ENCODE measurements at regions of chr6 and their contacts with region 1.

Region 1: DNA sequence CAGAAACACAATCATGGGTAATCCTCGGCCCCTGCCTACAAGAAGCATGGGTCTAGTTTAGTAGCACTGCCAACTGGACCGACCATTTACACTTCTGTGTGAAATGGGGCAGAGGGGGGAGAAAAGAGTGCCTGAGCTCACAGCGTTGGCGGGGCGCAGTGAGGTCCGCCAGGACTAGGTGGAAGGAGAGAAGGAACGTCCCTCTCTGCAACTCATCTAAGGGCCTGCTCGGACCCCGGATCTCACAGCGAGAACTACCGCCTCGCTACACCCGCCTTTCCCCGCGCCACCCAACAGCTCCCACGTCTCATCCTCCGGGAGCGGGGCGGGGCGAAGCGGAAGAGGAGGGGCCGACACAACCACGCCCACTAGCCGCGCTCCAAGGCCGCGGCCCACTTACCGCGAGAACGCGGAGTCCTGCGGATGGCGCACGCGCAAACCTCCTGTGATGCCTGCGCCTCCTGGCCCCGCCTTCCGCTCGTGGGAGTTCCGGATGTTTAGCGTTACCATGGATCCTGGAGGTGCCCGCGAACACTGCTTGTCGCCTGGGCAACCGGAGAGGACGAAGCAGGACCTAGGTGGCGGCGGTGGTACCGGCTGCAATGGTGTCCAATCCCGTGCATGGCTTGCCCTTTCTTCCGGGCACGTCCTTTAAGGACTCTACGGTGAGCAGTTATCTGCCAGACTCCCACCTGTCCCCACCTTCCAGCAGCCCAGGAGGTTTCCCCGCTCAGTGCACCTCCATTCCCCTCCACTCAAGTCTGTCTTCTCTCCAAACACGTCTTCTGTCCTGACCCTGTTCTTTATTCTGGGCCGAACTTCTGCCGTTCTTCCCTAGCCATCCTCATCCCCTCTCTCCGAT is at the start of gene EFHC1:
- DNase-seq: peak; percentile 97 to 99 (median 98)
- ATAC-seq: peak; percentile 96
- H3K4me3 ChIP-seq: peak within 1 kb of the TSS; percentile 69
- H3K27ac ChIP-seq: peak within 1 kb of the TSS; percentile 75
- H3K4me1 ChIP-seq: peaks cover 24 to 31% of the 10 kb centered on the region in 2 experiments
- H3K27me3 ChIP-seq: no peaks in the 10 kb centered on the region; a peak in 1 of 5 replicates
- CTCF ChIP-seq: peak in 1 of 3 experiments; percentile 29; a peak in 1 of 6 replicates
- EP300 ChIP-seq: no peak
- POLR2A ChIP-seq: peak; percentile 93
- RAD21 ChIP-seq: peak in 1 of 2 experiments; percentile 15; a peak in 1 of 4 replicates
- polyA plus RNA-seq, gene EFHC1: 15.7 to 17.2 TPM

Region 2: GRCh38 chr6:52482903-52483670 is 63.0 kb after region 1 on chr6:
- CTCF ChIA-PET with region 1: no interaction called
- POLR2A ChIA-PET with region 1: interaction called, 3 read pairs
- in situ Hi-C with region 1: no loop called
- intact Hi-C with region 1: loop called (anchors 5 kb)
- DNase-seq: peak; percentile 50 to 90 (median 64)
- ATAC-seq: peak; percentile 87
- H3K4me3 ChIP-seq: peak overlapping the region; percentile 21; the same call in 1 of the 2 replicates
- H3K27ac ChIP-seq: peak overlapping the region; percentile 76
- H3K4me1 ChIP-seq: peaks cover 0 to 30% of the 10 kb centered on the region in 2 experiments
- H3K27me3 ChIP-seq: no peaks in the 10 kb centered on the region
- CTCF ChIP-seq: no peak
- EP300 ChIP-seq: peak; percentile 69
- POLR2A ChIP-seq: no peak
- RAD21 ChIP-seq: no peak

Region 3: DNA sequence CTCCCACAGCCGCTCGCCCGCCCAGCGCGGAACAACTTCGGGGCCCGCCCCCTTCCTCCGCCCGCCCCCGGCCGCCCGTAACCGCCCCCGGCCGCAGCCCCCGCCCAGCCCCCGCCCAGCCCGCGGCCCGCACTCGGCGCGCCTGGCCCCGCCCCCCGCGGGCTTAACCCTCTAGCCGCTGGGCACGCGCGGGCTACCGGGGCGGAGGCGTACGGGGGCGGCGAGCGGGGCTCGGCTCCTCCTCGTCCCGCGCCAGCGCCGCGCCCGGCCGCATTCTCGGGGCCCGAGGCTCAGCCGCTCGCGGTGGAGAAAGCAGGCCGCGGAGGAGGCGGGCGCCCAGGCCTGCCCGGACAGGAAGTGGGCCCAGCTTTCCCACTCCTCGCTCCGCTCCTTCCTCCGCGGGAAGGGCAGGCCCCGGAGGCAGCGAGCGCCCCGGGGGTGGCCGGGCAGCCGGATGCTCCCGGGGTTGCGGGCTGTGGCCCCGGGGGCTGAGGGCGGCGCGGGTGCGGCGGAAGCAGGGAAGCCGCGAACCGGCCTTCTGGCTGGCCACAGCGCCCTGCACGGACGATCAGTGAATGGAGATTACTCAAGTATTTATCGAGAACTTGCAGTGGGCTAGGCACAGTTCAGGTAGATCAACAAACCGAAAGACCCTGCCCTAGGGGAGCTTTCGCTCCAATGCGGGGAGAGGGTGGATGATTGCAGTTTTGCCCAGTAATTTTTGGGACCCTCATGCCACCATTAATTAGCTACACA is 157.2 kb after region 1 on chr6 and contains the start of gene TRAM2:
- CTCF ChIA-PET with region 1: no interaction called
- POLR2A ChIA-PET with region 1: interaction called, 7 read pairs
- in situ Hi-C with region 1: no loop called
- intact Hi-C with region 1: loop called (anchors 5 kb)
- DNase-seq: peak; percentile 89 to 95 (median 94)
- ATAC-seq: peak; percentile 82
- H3K4me3 ChIP-seq: peak within 1 kb of the TSS; percentile 77
- H3K27ac ChIP-seq: peak within 1 kb of the TSS; percentile 85
- H3K4me1 ChIP-seq: peaks cover 22 to 30% of the 10 kb centered on the region in 2 experiments; a peak in 4 of 5 replicates
- H3K27me3 ChIP-seq: no peaks in the 10 kb centered on the region
- CTCF ChIP-seq: peak; percentile 18 to 28 (median 26); a peak in 2 of 6 replicates
- EP300 ChIP-seq: no peak; the same call in 1 of the 2 replicates
- POLR2A ChIP-seq: peak; percentile 80
- RAD21 ChIP-seq: peak in 1 of 2 experiments; percentile 31; a peak in 2 of 4 replicates
- polyA plus RNA-seq, gene TRAM2: 2.6 to 2.8 TPM

Region 4: DNA sequence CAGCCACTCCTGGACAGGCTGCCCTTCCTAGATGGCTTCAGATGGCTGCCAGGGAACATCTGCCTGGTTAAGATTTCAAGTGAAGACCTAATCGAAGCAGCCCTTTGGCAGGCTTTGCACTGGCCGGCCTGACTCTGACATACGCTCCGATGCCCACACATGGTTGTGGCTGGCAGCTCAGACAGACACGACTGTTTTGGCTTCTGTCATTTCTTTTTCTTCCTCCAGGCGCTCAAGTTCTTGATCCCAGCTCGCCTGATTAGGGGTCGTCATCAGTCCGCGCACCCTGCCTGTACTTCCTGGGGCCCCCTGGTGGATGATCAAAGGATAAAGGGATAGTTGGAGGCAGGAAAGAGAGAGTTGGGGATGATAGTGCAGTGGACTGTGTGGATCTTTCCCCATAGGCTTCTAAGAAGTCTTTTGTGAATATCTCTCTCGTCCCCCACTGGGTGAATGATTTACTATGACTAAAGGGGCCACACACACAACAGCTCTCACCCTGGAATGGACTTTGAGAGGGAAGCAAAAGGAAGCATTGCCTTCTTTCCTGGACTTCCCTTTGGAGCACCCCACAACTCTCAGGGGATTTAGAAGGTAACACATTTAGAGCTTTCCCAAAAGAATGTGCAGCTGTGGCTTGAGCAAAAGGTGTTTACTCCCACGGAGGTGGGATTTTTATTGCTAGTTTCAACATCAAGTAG is 178.2 kb after region 1 on chr6:
- CTCF ChIA-PET with region 1: interaction called, 11 read pairs
- POLR2A ChIA-PET with region 1: interaction called, 3 read pairs
- in situ Hi-C with region 1: loop called (anchors 5 kb)
- intact Hi-C with region 1: loop called (anchors 2 kb)
- DNase-seq: peak; percentile 87 to 89 (median 89)
- ATAC-seq: peak; percentile 96
- H3K4me3 ChIP-seq: peak overlapping the region; percentile 3; the same call in 1 of the 2 replicates
- H3K27ac ChIP-seq: peak overlapping the region; percentile 29; the same call in 1 of the 3 replicates
- H3K4me1 ChIP-seq: peaks cover 0 to 17% of the 10 kb centered on the region in 2 experiments; a peak in 3 of 5 replicates
- H3K27me3 ChIP-seq: no peaks in the 10 kb centered on the region
- CTCF ChIP-seq: peak; percentile 93 to 98 (median 93)
- EP300 ChIP-seq: peak; percentile 35; the same call in 1 of the 2 replicates
- POLR2A ChIP-seq: peak; percentile 55; the same call in 1 of the 2 replicates
- RAD21 ChIP-seq: peak; percentile 68 to 79

Region 5: DNA sequence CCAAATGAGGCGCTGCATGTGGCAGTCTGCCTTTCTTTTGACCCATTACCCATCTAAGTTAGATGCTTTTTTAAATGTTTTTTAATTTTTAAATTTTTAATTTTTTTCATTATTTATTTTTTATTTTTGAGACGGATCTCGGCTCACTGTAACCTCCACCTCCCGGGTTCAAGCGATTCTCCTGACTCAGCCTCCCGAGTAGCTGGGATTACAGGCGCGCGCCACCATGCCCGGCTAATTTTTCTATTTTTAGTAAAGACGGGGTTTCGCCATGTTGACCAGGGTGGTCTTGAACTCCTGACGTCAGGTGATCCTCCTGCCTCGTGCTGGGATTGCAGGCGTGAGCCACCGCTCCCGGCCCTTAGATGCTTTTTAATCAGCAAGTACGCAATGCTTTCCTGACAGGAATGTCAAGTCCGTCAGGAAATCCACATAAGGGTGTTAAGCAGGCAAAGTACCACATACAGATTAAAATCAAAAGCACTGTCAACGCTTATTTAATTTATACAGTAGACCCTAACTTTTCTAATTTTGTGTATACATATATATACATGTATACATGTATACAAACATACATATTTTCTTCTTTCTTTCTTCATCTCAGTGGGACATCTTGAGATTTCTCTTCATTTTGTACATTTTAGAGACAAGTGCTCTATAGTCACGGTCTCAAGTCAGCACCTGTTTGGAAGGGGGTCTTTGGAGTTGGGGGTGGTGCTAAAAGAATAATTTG is 576.0 kb after region 1 on chr6:
- CTCF ChIA-PET with region 1: no interaction called
- POLR2A ChIA-PET with region 1: no interaction called
- in situ Hi-C with region 1: no loop called
- intact Hi-C with region 1: loop called (anchors 5 kb)
- DNase-seq: peak in 1 of 4 experiments; percentile 79
- ATAC-seq: no peak
- H3K4me3 ChIP-seq: peak overlapping the region; percentile 28; the same call in 1 of the 2 replicates
- H3K27ac ChIP-seq: no peak overlapping the region
- H3K4me1 ChIP-seq: peaks cover 0 to 10% of the 10 kb centered on the region in 2 experiments; a peak in 3 of 5 replicates
- H3K27me3 ChIP-seq: no peaks in the 10 kb centered on the region
- CTCF ChIP-seq: no peak
- EP300 ChIP-seq: no peak
- POLR2A ChIP-seq: no peak
- RAD21 ChIP-seq: no peak